B cell (primary cell): ENCODE measurements at regions of chr6 and their contacts with region 1.

Region 1: DNA sequence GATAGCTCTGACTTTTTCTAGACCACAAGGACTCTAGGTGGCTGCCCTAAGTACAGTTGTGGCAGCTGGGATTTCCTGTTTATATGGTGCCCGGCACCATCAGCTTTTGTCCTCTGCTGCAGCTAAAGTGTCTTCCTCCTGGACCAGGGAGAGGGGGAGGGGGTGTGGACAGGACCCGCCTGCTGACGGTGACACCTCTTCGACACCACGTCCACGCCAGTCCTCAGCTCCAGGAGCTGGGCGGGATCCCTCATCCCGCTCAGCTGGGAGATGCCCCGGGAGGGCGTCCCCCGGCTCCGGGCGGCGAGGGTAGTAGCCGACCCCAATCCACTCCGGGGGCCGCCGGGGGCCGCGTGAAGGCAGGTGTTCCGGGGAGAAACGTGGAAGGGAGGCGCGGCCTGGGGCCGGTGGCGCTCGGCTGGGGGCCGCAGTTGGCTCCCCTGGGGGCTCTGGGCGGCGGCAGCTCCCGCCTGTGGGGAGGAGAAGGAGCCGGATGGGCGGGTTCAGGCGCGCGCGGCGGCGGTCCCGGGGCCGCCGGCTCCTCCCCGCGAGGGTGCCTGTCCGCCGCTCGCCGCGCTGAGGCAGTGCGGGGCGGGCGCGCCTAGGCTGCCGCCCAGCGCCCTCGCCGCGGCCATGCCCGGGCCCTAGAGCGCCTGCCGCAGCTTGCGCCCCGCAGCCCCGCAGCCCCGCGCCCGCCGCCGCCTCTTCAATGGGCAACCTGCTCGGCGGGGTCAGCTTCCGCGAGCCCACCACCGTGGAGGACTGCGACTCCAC is at the start of gene OGFRL1:
- DNase-seq: peak; percentile 88
- ATAC-seq: peak; percentile 78
- H3K4me3 ChIP-seq: peak within 1 kb of the TSS; percentile 66 to 82 (median 76)
- H3K4me3 Mint-ChIP-seq: peak within 1 kb of the TSS; percentile 93
- H3K27ac ChIP-seq: peak within 1 kb of the TSS; percentile 95
- H3K27ac Mint-ChIP-seq: peak within 1 kb of the TSS; percentile 97
- H3K4me1 ChIP-seq: peaks cover 39 to 40% of the 10 kb centered on the region in 2 donors
- H3K4me1 Mint-ChIP-seq: peaks cover 45% of the 10 kb centered on the region
- H3K27me3 ChIP-seq: no peaks in the 10 kb centered on the region
- H3K27me3 Mint-ChIP-seq: no peaks in the 10 kb centered on the region
- CTCF ChIP-seq: no peak
- total RNA-seq, gene OGFRL1: 31.6 and 33.7 TPM in 2 replicates

Region 2: GRCh38 chr6:70413114-70413991 is 875.1 kb before region 1 on chr6 and contains the start of gene FAM135A:
- CTCF ChIA-PET with region 1: no interaction called
- POLR2A ChIA-PET with region 1: no interaction called
- intact Hi-C with region 1: loop called (anchors 1 kb)
- DNase-seq: peak; percentile 97
- ATAC-seq: peak; percentile 98
- H3K4me3 ChIP-seq: peak within 1 kb of the TSS; percentile 71 to 88 (median 79)
- H3K4me3 Mint-ChIP-seq: peak within 1 kb of the TSS; percentile 97
- H3K27ac ChIP-seq: peak within 1 kb of the TSS; percentile 67 to 76
- H3K27ac Mint-ChIP-seq: peak within 1 kb of the TSS; percentile 87
- H3K4me1 ChIP-seq: peaks cover 7 to 17% of the 10 kb centered on the region in 2 donors
- H3K4me1 Mint-ChIP-seq: peaks cover 23% of the 10 kb centered on the region
- H3K27me3 ChIP-seq: no peaks in the 10 kb centered on the region
- H3K27me3 Mint-ChIP-seq: no peaks in the 10 kb centered on the region
- CTCF ChIP-seq: no peak
- total RNA-seq, gene FAM135A: 28.9 and 30.6 TPM in 2 replicates

Region 3: GRCh38 chr6:70667711-70668498 is 620.5 kb before region 1 on chr6 and contains the start of gene SMAP1:
- CTCF ChIA-PET with region 1: no interaction called
- POLR2A ChIA-PET with region 1: no interaction called
- intact Hi-C with region 1: loop called (anchors 2 kb)
- DNase-seq: peak; percentile 95
- ATAC-seq: peak; percentile 97
- H3K4me3 ChIP-seq: peak within 1 kb of the TSS; percentile 69 to 92 (median 82)
- H3K4me3 Mint-ChIP-seq: peak within 1 kb of the TSS; percentile 90
- H3K27ac ChIP-seq: peak within 1 kb of the TSS; percentile 60 to 83
- H3K27ac Mint-ChIP-seq: peak within 1 kb of the TSS; percentile 93
- H3K4me1 ChIP-seq: peaks cover 17 to 23% of the 10 kb centered on the region in 2 donors
- H3K4me1 Mint-ChIP-seq: peaks cover 37% of the 10 kb centered on the region
- H3K27me3 ChIP-seq: no peaks in the 10 kb centered on the region
- H3K27me3 Mint-ChIP-seq: peaks cover 6% of the 10 kb centered on the region
- CTCF ChIP-seq: no peak
- total RNA-seq, gene SMAP1: 19.7 and 21.7 TPM in 2 replicates

Region 4: DNA sequence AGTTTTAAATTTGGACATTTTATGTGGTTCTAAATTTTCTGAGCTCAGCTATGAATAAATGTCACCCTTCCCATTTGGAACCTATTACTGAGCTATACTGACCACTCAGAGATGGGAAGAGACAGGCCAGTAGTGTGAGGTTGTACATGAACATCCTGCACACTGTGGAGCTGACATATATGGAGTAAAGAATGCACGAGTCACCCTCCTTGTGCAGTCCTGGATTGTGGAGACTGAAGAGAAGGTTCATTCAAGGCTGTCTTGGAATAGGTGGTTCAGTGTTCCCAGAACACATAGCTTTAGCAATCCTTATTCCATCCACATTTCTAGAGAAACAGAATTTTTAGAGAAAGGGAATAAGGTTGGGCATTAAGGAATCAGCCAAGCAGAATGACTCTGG is 50.1 kb before region 1 on chr6:
- CTCF ChIA-PET with region 1: no interaction called
- POLR2A ChIA-PET with region 1: no interaction called
- intact Hi-C with region 1: loop called (anchors 10 kb)
- DNase-seq: no peak
- ATAC-seq: no peak
- H3K4me3 ChIP-seq: no peak overlapping the region
- H3K4me3 Mint-ChIP-seq: no peak overlapping the region
- H3K27ac ChIP-seq: no peak overlapping the region
- H3K27ac Mint-ChIP-seq: no peak overlapping the region
- H3K4me1 ChIP-seq: peaks cover 0 to 2% of the 10 kb centered on the region in 2 donors
- H3K4me1 Mint-ChIP-seq: peaks cover 5% of the 10 kb centered on the region
- H3K27me3 ChIP-seq: no peaks in the 10 kb centered on the region
- H3K27me3 Mint-ChIP-seq: peaks cover 6% of the 10 kb centered on the region
- CTCF ChIP-seq: no peak

Region 5: DNA sequence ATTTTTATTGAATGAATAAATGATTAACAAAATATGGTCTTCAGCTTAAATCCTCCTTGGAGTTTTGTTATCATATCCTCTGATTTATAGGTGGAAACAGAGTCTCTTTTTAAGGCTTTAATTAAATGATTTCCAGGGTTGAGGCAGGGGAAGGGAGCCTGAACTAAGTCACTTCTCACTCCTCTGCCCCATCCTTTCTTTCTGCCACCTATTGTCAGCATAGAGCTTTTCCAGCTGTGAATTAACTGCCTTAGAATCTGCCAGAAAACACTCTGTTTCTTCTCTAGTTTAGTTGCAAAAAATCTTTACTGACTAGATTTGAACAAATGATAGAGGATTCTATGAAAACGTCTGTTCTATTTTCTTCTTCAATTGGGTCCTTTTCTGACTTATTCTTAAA is 10.0 kb after region 1 on chr6:
- CTCF ChIA-PET with region 1: interaction called, 10 read pairs
- POLR2A ChIA-PET with region 1: interaction called, 3 read pairs
- intact Hi-C with region 1: no loop called
- DNase-seq: no peak
- ATAC-seq: no peak
- H3K4me3 ChIP-seq: no peak overlapping the region
- H3K4me3 Mint-ChIP-seq: no peak overlapping the region
- H3K27ac ChIP-seq: no peak overlapping the region
- H3K27ac Mint-ChIP-seq: no peak overlapping the region
- H3K4me1 ChIP-seq: no peaks in the 10 kb centered on the region
- H3K4me1 Mint-ChIP-seq: peaks cover 4% of the 10 kb centered on the region
- H3K27me3 ChIP-seq: no peaks in the 10 kb centered on the region
- H3K27me3 Mint-ChIP-seq: no peaks in the 10 kb centered on the region
- CTCF ChIP-seq: no peak

Region 6: GRCh38 chr6:72382602-72383529 is 1094.5 kb after region 1 on chr6:
- CTCF ChIA-PET with region 1: no interaction called
- POLR2A ChIA-PET with region 1: no interaction called
- intact Hi-C with region 1: loop called (anchors 2 kb)
- DNase-seq: peak; percentile 68
- ATAC-seq: peak; percentile 80
- H3K4me3 ChIP-seq: peak overlapping the region in 3 of 5 experiments; percentile 4 to 46 (median 17)
- H3K4me3 Mint-ChIP-seq: peak overlapping the region; percentile 72
- H3K27ac ChIP-seq: peak overlapping the region; percentile 79 to 83
- H3K27ac Mint-ChIP-seq: peak overlapping the region; percentile 92
- H3K4me1 ChIP-seq: peaks cover 23 to 29% of the 10 kb centered on the region in 2 donors
- H3K4me1 Mint-ChIP-seq: peaks cover 32% of the 10 kb centered on the region
- H3K27me3 ChIP-seq: no peaks in the 10 kb centered on the region
- H3K27me3 Mint-ChIP-seq: no peaks in the 10 kb centered on the region
- CTCF ChIP-seq: no peak